BJ (cell line): ENCODE measurements at regions of chr12 and their contacts with region 1.

Region 1: GRCh38 chr12:45762185-45763110 is 32.9 kb downstream of the ARID2 start:
- DNase-seq: peak; percentile 8
- H3K4me3 ChIP-seq: no peak overlapping the region
- H3K27me3 ChIP-seq: no peaks in the 10 kb centered on the region
- CTCF ChIP-seq: peak; percentile 71

Region 2: DNA sequence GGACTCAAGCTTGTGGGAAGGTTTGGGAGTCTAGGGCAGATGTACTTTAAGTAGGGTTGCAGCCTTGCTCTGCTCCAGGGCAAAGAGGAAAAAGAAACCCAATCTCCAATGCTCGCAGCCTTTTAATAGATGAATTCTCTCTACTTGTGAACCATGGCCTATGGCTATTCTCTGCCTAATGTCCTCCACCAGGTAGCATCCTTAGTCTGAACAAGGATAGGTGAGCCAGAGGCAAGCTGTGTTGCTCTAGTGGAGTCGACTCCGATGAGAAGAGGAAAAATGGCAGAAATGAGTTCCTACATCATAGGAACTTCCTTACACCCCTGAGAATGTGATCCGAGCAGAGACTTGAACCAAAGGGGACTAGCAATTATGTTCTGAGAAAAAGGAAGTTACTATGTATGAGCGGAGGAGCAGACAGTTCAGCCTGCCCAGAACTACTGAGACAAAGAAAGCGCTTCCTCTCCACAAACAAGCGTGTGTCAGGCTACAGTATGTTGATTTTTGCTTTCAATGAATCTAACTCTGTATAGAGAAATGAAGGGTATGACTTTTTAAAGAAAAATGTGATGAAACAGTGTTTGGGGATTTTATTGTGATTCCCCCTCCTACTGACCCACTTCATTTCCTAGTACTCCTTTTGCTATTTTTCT is 186.5 kb before region 1 on chr12:
- CTCF ChIA-PET with region 1: no interaction called
- POLR2A ChIA-PET with region 1: no interaction called
- DNase-seq: no peak
- H3K4me3 ChIP-seq: no peak overlapping the region
- H3K27me3 ChIP-seq: peaks cover 9% of the 10 kb centered on the region
- CTCF ChIP-seq: no peak

Region 3: DNA sequence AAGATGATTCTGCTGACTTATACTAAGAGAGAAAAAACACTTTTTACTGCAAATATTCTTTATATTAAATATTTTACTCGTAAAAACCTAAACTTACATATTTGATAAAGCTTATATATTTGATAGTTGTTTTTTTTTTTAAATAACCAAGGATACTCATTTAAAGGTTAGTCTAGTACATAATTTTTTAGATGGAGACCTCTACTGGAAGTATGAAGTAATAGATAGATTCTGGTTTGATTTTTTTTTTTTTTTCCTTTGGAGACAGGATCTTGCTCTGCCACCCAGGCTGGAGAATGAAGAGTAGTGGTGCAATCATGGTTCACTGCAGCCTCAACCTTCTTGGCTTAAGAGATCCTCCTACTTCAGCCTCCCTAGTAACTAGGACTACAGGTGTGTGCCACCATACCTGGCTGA is 16.6 kb before region 1 on chr12:
- CTCF ChIA-PET with region 1: interaction called, 10 read pairs
- POLR2A ChIA-PET with region 1: no interaction called
- DNase-seq: no peak
- H3K4me3 ChIP-seq: no peak overlapping the region
- H3K27me3 ChIP-seq: no peaks in the 10 kb centered on the region
- CTCF ChIP-seq: peak; percentile 26; the same call in 1 of the 2 replicates

Region 4: GRCh38 chr12:46005151-46005797 is 242.8 kb after region 1 on chr12:
- CTCF ChIA-PET with region 1: interaction called, 10 read pairs
- POLR2A ChIA-PET with region 1: no interaction called
- DNase-seq: no peak
- H3K4me3 ChIP-seq: no peak overlapping the region
- H3K27me3 ChIP-seq: peaks cover 1% of the 10 kb centered on the region; the same call in 1 of the 2 replicates
- CTCF ChIP-seq: peak; percentile 36; the same call in 1 of the 2 replicates